ENCODE measurements at regions of chr10 and their contacts with region 1.

Region 1: DNA sequence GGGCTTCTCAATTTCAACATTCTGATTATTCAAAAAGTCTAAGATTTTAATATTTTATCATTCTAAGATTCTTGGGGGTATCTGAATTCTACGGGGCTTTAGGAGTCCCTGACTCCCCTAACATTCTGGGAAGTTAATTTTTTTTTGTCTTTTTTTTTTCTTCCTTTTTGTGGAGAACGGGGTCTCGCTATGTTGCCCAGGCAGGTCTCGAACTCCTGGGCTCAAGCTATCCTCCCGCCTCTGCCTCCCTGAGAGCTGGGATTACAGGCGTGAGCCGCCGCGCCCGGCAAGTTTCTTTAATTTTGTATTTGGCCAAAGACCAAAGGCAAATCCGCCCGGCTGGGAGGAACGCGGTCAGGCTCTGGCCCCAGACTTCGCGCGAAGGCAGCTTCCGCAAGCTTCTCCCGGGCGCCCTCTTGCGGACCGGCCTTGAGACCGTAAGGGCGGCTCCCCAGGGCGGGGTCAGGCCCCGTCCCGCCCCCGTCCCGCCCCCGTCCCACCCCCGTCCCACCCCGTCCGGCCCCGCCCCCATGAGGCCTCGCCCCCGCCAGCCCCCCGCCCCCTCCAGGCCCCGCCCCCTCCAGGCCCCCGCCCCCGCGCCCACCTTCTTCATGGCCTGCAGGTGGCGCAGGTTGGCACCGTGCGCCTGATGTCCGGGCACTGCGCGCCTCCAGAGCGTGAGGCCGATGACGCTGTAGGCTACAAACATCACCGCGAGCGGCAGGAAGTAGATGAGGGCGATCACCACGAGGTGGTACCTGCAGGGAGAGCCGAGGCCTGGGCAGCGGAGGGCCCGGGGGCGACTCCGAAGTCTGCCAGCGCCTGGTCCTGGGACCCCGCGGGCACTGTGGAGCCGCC is 8.2 kb downstream of the TACR2 start:
- DNase-seq: peak; percentile 90 to 94
- H3K4me3 ChIP-seq: peak overlapping the region; percentile 39 to 61 (median 54)
- H3K27ac ChIP-seq: peak overlapping the region; percentile 79 to 88
- H3K4me1 ChIP-seq: no peaks in the 10 kb centered on the region
- H3K27me3 ChIP-seq: no peaks in the 10 kb centered on the region
- CTCF ChIP-seq: peak; percentile 41 to 62 (median 46)
- POLR2A ChIP-seq: no peak

Region 2: DNA sequence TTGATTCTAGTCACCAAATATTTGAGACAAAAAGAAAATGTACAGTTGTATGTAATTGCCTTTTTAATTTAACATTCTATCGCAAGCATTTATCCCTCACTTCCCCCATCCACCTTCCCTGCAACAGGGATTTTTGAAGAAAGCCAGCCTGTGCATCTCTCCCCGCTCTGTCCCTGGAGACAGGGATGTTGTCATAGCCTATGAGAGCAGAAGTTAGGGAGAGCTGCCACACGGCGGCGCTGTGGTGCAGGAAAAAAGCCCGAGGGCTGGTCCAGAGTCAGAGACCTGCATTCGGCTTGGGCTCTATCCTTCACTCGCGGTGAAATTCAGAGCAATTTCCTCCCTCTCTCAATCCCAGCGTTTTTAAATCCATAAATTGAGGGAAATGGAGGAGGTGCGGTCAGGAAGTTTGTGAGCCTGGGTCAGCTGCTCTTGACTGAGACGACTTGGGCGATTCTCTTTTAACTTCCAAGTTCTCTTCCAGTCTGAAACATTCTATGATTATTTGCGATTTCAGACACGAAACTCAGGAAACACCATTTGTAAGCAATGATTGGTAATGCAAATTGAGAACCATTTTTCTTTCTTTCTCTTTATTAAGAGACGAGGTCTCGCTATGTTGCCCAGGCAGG is 170.9 kb before region 1 on chr10:
- intact Hi-C with region 1: loop called (anchors 5 kb)
- DNase-seq: peak; percentile 75 to 89
- H3K4me3 ChIP-seq: no peak overlapping the region
- H3K27ac ChIP-seq: no peak overlapping the region
- H3K4me1 ChIP-seq: no peaks in the 10 kb centered on the region
- H3K27me3 ChIP-seq: no peaks in the 10 kb centered on the region
- CTCF ChIP-seq: peak; percentile 96 to 99 (median 98)
- POLR2A ChIP-seq: no peak

Region 3: GRCh38 chr10:69731184-69731583 is 322.6 kb after region 1 on chr10:
- intact Hi-C with region 1: loop called (anchors 2 kb)
- DNase-seq: no peak
- H3K4me3 ChIP-seq: no peak overlapping the region
- H3K27ac ChIP-seq: peak overlapping the region in 1 of 2 donors; percentile 48
- H3K4me1 ChIP-seq: no peaks in the 10 kb centered on the region
- H3K27me3 ChIP-seq: no peaks in the 10 kb centered on the region
- CTCF ChIP-seq: no peak
- POLR2A ChIP-seq: no peak

Measured in breast epithelium (tissue), 4 donors.